ENCODE measurements at regions of chr18 and their contacts with region 1.

Region 1: GRCh38 chr18:51668101-51668500 is 470.6 kb upstream of the MEX3C start:
- DNase-seq: peak in 1 of 2 experiments; percentile 90
- H3K4me3 ChIP-seq: no peak overlapping the region; a peak in 1 of 8 replicates
- H3K27ac ChIP-seq: no peak overlapping the region
- H3K4me1 ChIP-seq: peaks cover 0 to 3% (median 1%) of the 10 kb centered on the region in 4 experiments; a peak in 5 of 7 replicates
- H3K27me3 ChIP-seq: no peaks in the 10 kb centered on the region
- CTCF ChIP-seq: peak; percentile 63 to 81 (median 76)
- EP300 ChIP-seq: no peak
- POLR2A ChIP-seq: no peak
- RAD21 ChIP-seq: peak; percentile 94 to 95

Region 2: DNA sequence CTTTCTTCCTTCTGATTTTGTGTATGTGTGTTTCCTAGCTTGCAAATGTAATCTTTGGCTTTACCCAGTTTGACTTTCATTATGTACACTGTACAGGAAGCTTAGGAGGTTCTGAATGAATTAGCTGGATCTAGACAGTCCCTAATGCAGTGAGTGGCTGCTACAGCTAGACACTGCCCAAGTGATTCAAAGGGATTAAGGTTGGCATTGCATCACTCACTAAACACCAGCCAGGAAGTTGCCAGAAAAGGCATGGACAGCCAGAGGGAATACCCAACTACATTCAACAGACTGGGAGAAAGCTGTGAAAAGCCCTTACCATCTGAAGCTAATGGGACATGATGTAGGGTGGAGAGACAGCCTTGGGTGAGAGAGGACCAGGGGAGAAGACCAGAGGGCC is 154.6 kb before region 1 on chr18:
- CTCF ChIA-PET with region 1: no interaction called
- POLR2A ChIA-PET with region 1: no interaction called
- DNase-seq: no peak
- H3K4me3 ChIP-seq: no peak overlapping the region
- H3K27ac ChIP-seq: no peak overlapping the region
- H3K4me1 ChIP-seq: no peaks in the 10 kb centered on the region
- H3K27me3 ChIP-seq: no peaks in the 10 kb centered on the region
- CTCF ChIP-seq: no peak
- EP300 ChIP-seq: no peak
- POLR2A ChIP-seq: no peak
- RAD21 ChIP-seq: no peak

Region 3: DNA sequence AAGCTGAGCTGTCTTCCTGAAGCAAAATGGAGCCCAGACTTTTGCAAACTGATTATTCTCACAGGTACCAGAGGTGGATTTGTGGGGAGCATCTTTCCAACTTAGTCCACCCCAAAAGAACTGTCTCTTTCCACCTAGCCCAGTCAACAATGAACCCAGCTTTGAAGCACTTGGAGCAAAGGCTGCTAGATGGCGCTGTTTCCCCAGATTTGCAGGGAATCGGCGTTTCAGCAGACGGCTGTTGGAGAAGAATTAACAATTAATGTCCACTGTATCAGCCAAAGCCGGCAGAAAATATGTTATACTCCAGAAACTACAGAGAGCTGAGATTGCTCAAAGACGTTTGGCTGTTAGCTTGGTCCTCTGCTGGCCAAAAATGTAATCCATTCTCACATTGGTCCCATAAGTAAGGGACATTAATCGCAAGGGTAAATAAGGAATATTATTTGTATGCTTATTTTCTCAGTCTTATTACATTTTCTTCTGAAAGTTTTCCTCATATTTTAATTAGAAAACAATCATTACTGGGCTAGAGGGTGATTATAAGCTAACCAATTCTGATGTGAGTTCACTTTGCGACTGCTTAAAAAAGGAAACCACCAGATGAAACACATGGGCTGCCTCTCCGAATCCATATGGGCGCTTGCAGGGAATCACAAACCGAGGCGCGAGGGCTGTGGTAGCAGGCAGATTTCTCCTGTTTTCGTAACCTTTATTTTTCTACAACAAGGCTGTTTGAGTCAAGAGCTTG is 46.8 kb before region 1 on chr18:
- CTCF ChIA-PET with region 1: interaction called, 14 read pairs
- POLR2A ChIA-PET with region 1: no interaction called
- DNase-seq: peak; percentile 33 to 88
- H3K4me3 ChIP-seq: peak overlapping the region in 1 of 4 experiments; percentile 13; a peak in 1 of 8 replicates
- H3K27ac ChIP-seq: no peak overlapping the region
- H3K4me1 ChIP-seq: peaks cover 0 to 11% (median 8%) of the 10 kb centered on the region in 4 experiments; a peak in 5 of 7 replicates
- H3K27me3 ChIP-seq: no peaks in the 10 kb centered on the region
- CTCF ChIP-seq: peak; percentile 77 to 91 (median 82)
- EP300 ChIP-seq: no peak
- POLR2A ChIP-seq: no peak
- RAD21 ChIP-seq: peak; percentile 91 to 95

Region 4: GRCh38 chr18:52077251-52077983 is 409.3 kb after region 1 on chr18:
- CTCF ChIA-PET with region 1: no interaction called
- POLR2A ChIA-PET with region 1: no interaction called
- DNase-seq: no peak
- H3K4me3 ChIP-seq: no peak overlapping the region
- H3K27ac ChIP-seq: no peak overlapping the region
- H3K4me1 ChIP-seq: no peaks in the 10 kb centered on the region
- H3K27me3 ChIP-seq: no peaks in the 10 kb centered on the region
- CTCF ChIP-seq: no peak
- EP300 ChIP-seq: no peak
- POLR2A ChIP-seq: no peak
- RAD21 ChIP-seq: no peak

Region 5: DNA sequence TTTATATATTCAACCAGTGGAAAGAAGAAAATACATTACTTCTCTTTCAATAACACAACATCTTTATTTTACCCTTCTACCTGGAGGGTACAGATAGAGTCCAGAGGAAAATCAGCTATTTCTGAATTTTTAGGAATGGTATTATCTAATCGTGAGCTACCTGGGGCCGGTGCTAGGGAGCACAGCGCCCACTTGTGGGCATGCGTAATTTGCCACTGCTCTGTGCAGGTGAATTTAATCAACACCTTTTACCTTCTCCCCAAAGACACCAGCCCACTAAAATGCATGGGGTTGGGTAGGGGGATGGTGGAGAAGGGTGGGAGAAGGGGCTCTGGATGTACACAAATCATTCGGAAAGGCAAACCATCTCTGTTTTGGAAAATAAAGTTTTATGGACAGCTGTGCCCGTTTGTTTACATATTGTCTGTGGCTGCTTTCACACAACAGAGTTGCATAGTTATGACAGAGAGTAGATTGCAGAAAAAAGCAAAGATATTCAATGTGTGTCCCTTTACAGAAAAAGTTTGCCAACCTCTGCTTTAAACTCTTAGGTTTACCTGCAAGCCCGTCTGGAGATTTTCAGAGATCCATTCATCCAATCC is 620.4 kb after region 1 on chr18:
- CTCF ChIA-PET with region 1: interaction called, 28 read pairs
- POLR2A ChIA-PET with region 1: no interaction called
- DNase-seq: peak; percentile 33 to 81
- H3K4me3 ChIP-seq: no peak overlapping the region
- H3K27ac ChIP-seq: no peak overlapping the region
- H3K4me1 ChIP-seq: peaks cover 0 to 6% (median 0%) of the 10 kb centered on the region in 4 experiments; a peak in 3 of 7 replicates
- H3K27me3 ChIP-seq: no peaks in the 10 kb centered on the region; a peak in 1 of 7 replicates
- CTCF ChIP-seq: peak; percentile 76 to 87 (median 82)
- EP300 ChIP-seq: no peak
- POLR2A ChIP-seq: no peak
- RAD21 ChIP-seq: peak; percentile 93 to 95

Region 6: DNA sequence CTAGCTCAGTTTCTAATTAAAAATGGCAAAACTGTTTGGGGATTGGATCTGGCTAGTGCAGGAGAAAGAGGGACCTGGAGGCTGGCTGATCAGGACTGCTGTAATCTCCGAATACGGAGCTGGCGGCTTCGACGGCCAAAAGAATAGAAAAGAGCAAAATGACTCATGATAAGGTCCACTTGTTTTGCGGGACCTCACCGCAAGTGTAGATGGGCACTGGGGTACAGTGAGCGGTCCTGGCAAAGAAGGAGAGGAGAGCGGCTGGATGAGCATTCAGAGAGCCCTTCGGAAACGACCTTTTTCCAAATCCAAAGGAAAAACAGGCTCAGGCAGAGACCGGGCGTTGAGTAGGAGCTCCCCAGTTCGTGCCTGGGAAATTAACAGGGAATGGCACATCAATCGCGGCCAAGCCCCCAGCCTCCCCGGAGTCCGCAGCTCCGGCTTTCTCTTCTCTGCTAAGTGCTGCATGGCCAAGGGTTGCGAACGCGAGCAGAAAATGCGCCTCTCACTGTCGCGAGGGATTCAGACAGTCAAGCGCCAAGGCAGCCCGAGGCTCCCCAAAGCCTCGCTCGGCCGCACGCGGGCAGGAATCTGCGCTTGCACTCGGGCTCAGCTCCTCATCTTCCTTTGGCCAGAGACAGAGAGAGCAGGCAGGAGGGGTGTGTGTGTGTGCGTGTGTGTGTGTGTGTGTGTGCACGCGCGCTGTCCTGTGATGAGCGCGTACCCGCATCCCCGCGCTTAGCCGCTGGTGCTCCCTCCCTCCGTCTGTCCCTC is 673.7 kb after region 1 on chr18:
- CTCF ChIA-PET with region 1: interaction called, 10 read pairs
- POLR2A ChIA-PET with region 1: no interaction called
- DNase-seq: peak in 1 of 2 experiments; percentile 71
- H3K4me3 ChIP-seq: peak overlapping the region; percentile 57 to 68 (median 62)
- H3K27ac ChIP-seq: no peak overlapping the region
- H3K4me1 ChIP-seq: peaks cover 3 to 6% (median 5%) of the 10 kb centered on the region in 4 experiments; a peak in 6 of 7 replicates
- H3K27me3 ChIP-seq: peaks cover 18 to 47% (median 36%) of the 10 kb centered on the region in 4 experiments
- CTCF ChIP-seq: no peak
- EP300 ChIP-seq: no peak
- POLR2A ChIP-seq: no peak
- RAD21 ChIP-seq: no peak

Region 7: GRCh38 chr18:52903857-52904256 is 1235.8 kb after region 1 on chr18:
- CTCF ChIA-PET with region 1: interaction called, 13 read pairs
- POLR2A ChIA-PET with region 1: no interaction called
- DNase-seq: peak in 1 of 2 experiments; percentile 73
- H3K4me3 ChIP-seq: no peak overlapping the region
- H3K27ac ChIP-seq: no peak overlapping the region
- H3K4me1 ChIP-seq: no peaks in the 10 kb centered on the region
- H3K27me3 ChIP-seq: no peaks in the 10 kb centered on the region
- CTCF ChIP-seq: peak; percentile 9 to 73 (median 61)
- EP300 ChIP-seq: no peak
- POLR2A ChIP-seq: no peak
- RAD21 ChIP-seq: peak; percentile 78 to 85

Measured in H1 (cell line).